ENCODE measurements at regions of chr11 and their contacts with region 1.

Region 1: DNA sequence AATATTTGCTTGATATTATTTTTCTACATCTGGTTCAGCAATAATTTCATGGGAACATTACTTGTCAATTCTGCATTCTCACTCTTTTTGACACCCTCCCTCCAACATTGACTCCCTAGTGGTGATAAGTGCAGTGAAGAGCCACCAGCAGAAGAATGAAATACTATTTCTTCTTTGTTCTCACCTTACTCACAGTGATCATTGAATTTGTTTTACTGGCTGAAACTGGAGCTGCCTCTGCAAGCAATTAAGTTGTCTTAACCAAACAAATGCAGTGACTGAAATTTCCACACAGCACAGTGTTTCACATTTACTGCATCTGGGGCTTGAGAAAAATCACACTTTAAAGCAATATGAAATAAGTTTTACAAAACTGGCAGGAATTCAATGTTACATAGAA is 189.8 kb downstream of the JRKL start:
- DNase-seq: no peak
- H3K4me3 ChIP-seq: no peak overlapping the region
- CTCF ChIP-seq: no peak
- POLR2A ChIP-seq: no peak

Region 2: DNA sequence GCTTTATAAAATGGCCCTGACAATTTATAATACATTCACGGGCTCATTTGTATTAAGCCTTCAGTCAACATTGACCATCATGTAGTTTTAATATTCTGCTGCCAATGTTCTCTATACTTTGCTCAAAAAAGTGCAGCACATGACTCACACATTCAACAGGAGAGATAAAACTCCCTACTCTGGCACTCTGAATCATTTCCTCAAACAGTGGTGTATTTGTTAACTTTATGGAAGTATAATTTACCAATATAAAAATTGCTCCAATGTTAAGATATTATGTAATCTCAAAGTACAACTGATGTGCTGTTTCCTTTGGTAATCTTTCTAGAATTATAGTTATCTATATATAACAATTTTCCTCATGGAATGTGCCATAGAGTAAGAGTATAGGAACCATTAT is 276.6 kb before region 1 on chr11:
- intact Hi-C with region 1: no loop called
- DNase-seq: no peak
- H3K4me3 ChIP-seq: no peak overlapping the region
- CTCF ChIP-seq: no peak
- POLR2A ChIP-seq: no peak

Region 3: GRCh38 chr11:96551136-96551535 is 28.5 kb before region 1 on chr11:
- intact Hi-C with region 1: loop called (anchors 2 kb)
- DNase-seq: no peak
- H3K4me3 ChIP-seq: no peak overlapping the region
- CTCF ChIP-seq: no peak
- POLR2A ChIP-seq: no peak